Naive thymus-derived CD4-positive, alpha-beta T cell (primary cell): ENCODE measurements at regions of chr12 and their contacts with region 1.

Region 1: DNA sequence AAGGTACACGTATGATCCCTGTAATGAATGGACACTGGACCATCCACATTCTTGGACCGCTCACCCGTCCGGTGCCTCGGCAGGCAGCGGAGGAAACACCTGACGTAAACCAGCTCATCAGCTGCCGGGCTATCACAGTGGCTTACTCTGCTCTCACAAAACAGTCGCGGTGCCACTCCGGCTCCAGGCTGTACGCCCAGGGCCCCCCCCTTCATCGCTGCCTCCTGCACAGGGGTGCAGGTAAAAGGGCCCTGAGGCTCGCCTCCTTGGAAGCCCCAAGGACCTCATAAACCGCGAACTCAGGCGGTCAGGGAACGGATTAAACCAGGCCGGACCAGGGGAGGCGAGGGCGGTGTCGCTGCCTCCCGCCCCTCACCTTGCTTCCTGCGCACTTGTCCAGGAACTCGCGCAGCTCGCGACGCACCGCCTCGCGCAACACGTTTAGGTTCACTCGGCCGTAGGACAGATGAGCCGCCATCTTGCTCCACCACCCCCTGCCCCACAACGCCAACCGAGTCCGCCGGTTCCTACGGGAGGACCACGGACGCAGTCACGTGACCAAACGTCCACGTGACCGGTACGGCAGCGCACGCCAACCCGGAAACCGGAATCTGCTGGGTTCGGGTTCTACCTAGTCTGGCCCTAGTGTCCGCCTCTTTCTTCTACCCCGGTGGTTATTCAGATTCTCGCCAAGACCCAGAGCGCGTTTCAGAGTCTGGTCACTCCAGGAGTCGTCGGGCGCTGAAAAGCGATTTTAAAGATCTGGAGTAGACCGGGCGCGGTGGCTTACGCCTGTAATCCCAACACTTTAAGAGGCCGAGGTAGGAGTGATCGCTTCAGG is at the start of gene VPS33A:
- DNase-seq: peak; percentile 82 to 96 (median 90)
- ATAC-seq: peak; percentile 89
- H3K4me3 ChIP-seq: peak within 1 kb of the TSS; percentile 74
- H3K4me3 Mint-ChIP-seq: peak within 1 kb of the TSS; percentile 93 to 99 (median 96)
- H3K27ac ChIP-seq: peak within 1 kb of the TSS; percentile 95
- H3K27ac Mint-ChIP-seq: peak within 1 kb of the TSS; percentile 98 to 100 (median 99)
- H3K4me1 ChIP-seq: peaks cover 12 to 17% of the 10 kb centered on the region in 2 donors
- H3K4me1 Mint-ChIP-seq: peaks cover 0 to 37% (median 32%) of the 10 kb centered on the region in 7 donors
- H3K27me3 ChIP-seq: no peaks in the 10 kb centered on the region
- H3K27me3 Mint-ChIP-seq: peaks cover 0 to 6% (median 0%) of the 10 kb centered on the region in 5 donors
- total RNA-seq, gene VPS33A: 19.9 to 34.5 (median 31.4) TPM

Region 2: DNA sequence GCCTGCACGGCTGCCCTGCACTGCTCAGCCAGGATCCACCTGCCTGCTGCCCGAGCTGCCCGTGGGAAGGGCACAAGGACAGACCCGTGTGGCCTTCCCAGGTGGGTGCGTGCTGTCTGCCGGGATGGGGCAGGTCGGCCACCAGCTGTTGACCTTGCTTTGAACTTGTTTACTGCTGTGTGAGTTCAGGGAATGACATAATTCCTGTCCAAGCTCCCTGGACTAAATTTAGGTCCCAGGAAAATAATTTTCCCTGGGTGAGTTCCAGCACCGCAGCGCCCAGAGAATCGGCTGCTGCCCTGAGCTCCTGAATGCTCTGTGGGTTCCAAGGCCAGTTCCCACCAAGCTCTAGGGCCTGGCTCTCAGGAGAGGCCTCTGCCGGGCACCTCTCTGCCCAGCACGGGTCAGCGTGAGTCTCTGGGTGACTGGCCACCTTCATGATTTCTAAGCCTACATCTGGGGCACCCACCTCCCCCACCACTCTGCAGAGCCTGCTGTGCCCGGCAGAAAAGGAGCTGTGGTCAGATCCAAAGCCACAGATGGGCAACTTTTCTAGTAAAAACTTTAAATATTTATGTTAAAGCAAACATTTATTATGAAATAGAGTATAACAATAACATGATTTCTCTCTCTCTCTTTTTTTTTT is 214.8 kb before region 1 on chr12:
- CTCF ChIA-PET with region 1: interaction called, 10 read pairs
- POLR2A ChIA-PET with region 1: no interaction called
- intact Hi-C with region 1: loop called in 1 of 2 experiments (anchors 2 kb)
- DNase-seq: no peak
- ATAC-seq: no peak
- H3K4me3 ChIP-seq: no peak overlapping the region
- H3K4me3 Mint-ChIP-seq: no peak overlapping the region
- H3K27ac ChIP-seq: no peak overlapping the region
- H3K27ac Mint-ChIP-seq: no peak overlapping the region
- H3K4me1 ChIP-seq: no peaks in the 10 kb centered on the region
- H3K4me1 Mint-ChIP-seq: peaks cover 0 to 7% (median 5%) of the 10 kb centered on the region in 7 donors
- H3K27me3 ChIP-seq: no peaks in the 10 kb centered on the region
- H3K27me3 Mint-ChIP-seq: no peaks in the 10 kb centered on the region

Region 3: DNA sequence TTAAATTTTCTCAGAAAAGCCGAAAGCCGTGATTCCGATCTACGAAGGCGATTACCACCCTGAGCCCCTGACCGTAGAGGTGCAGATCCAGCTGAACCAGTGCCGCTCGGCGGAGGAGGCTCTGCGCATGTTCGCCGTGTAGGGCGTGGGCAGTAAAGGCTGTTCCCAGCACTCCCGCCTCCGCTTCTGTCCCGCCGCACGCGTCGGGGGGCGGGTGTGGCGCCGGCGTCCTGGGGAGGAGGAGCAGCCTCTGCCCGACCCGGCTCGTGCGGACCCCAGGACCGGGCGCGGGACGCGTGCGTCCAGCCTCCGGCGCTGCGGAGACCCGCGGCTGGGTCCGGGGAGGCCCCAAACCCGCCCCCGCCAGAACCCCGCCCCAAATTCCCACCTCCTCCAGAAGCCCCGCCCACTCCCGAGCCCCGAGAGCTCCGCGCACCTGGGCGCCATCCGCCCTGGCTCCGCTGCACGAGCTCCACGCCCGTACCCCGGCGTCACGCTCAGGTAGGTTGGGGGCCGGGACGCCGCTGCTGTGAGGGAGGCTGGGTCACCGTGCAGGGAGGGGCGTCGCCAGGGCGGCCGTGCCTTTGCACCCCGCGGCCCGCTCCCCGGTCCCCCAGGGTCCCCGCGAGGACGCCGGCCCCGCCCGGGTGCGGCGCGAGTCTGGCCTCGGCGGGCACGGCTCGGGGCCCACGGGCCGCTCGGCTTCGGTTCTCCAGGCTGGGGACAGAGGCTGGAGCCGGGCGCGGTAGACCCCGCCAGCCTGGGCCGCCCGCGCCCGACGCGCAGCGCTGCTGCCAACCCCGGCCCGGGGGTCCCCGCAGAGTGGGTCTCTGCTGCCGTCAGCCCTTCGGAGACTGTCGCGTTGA is 62.6 kb before region 1 on chr12 and contains the start of gene B3GNT4:
- CTCF ChIA-PET with region 1: no interaction called
- POLR2A ChIA-PET with region 1: interaction called, 5 read pairs
- intact Hi-C with region 1: loop called (anchors 2 kb)
- DNase-seq: peak; percentile 50 to 75 (median 67)
- ATAC-seq: peak; percentile 79
- H3K4me3 ChIP-seq: peak within 1 kb of the TSS; percentile 68
- H3K4me3 Mint-ChIP-seq: peak within 1 kb of the TSS; percentile 79 to 87 (median 82)
- H3K27ac ChIP-seq: no peak within 1 kb of the TSS
- H3K27ac Mint-ChIP-seq: peak within 1 kb of the TSS in 5 of 9 donors; percentile 44 to 77 (median 46)
- H3K4me1 ChIP-seq: peaks cover 6 to 10% of the 10 kb centered on the region in 2 donors
- H3K4me1 Mint-ChIP-seq: peaks cover 5 to 17% (median 14%) of the 10 kb centered on the region in 7 donors
- H3K27me3 ChIP-seq: peaks cover 0 to 3% of the 10 kb centered on the region in 2 donors
- H3K27me3 Mint-ChIP-seq: peaks cover 0 to 35% (median 0%) of the 10 kb centered on the region in 5 donors
- total RNA-seq, gene B3GNT4: 0.54 to 1.1 (median 0.70) TPM in 3 of 5 experiments, not detected in the others

Region 4: DNA sequence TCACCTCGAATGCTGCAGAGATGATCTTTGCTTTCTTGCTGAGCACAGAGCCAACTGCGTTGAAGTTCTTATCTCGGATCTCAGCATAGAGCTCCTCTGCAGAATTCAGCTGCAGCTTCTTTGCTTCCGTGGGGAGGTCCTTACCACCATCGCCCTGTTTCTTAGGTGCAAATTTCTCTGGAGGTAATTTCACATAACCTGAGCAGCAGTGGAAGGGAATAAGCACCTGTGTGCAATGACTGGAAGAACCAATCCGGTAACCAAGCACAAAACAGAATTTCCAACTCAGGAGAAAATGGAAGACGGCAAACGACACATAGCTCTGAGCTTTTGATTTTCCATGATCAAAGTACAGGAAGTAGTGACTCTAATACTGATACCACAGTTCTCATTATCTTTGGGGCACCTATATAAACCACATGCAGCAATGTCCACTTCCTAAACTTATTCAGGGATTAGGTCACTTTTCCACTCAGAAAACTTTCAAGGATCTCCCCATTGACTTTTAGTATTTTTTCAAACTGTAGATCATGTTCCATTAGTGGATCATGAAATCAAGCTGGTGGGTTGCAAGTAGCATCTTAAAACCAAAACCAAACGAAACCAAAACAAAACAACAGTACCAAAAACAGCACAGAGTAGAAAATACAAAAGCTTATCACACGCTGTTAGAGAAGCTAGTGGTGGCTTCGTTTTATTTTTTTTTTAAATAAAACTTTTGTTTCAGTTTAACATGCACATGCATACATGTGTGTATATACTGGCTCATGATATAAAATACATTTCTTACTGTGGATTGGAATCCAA is 21.4 kb before region 1 on chr12:
- CTCF ChIA-PET with region 1: interaction called, 4 read pairs
- POLR2A ChIA-PET with region 1: interaction called, 20 read pairs
- intact Hi-C with region 1: loop called (anchors 1 to 2 kb)
- DNase-seq: peak in 7 of 9 donors; percentile 18 to 59 (median 43)
- ATAC-seq: peak; percentile 80
- H3K4me3 ChIP-seq: peak overlapping the region; percentile 50
- H3K4me3 Mint-ChIP-seq: peak overlapping the region; percentile 76 to 87 (median 82)
- H3K27ac ChIP-seq: peak overlapping the region; percentile 58
- H3K27ac Mint-ChIP-seq: peak overlapping the region; percentile 71 to 94 (median 90)
- H3K4me1 ChIP-seq: peaks cover 19 to 26% of the 10 kb centered on the region in 2 donors
- H3K4me1 Mint-ChIP-seq: peaks cover 8 to 31% (median 27%) of the 10 kb centered on the region in 7 donors
- H3K27me3 ChIP-seq: no peaks in the 10 kb centered on the region
- H3K27me3 Mint-ChIP-seq: no peaks in the 10 kb centered on the region

Region 5: GRCh38 chr12:122336015-122336946 is 70.1 kb after region 1 on chr12:
- CTCF ChIA-PET with region 1: interaction called, 3 read pairs
- POLR2A ChIA-PET with region 1: no interaction called
- intact Hi-C with region 1: loop called in 1 of 2 experiments (anchors 1 kb)
- DNase-seq: peak in 8 of 9 donors; percentile 16 to 43 (median 33)
- ATAC-seq: peak; percentile 57
- H3K4me3 ChIP-seq: no peak overlapping the region
- H3K4me3 Mint-ChIP-seq: peak overlapping the region in 2 of 10 donors; percentile 21 to 32
- H3K27ac ChIP-seq: no peak overlapping the region
- H3K27ac Mint-ChIP-seq: peak overlapping the region in 7 of 9 donors; percentile 38 to 82 (median 71)
- H3K4me1 ChIP-seq: no peaks in the 10 kb centered on the region
- H3K4me1 Mint-ChIP-seq: peaks cover 5 to 18% (median 12%) of the 10 kb centered on the region in 7 donors
- H3K27me3 ChIP-seq: no peaks in the 10 kb centered on the region
- H3K27me3 Mint-ChIP-seq: no peaks in the 10 kb centered on the region

Region 6: DNA sequence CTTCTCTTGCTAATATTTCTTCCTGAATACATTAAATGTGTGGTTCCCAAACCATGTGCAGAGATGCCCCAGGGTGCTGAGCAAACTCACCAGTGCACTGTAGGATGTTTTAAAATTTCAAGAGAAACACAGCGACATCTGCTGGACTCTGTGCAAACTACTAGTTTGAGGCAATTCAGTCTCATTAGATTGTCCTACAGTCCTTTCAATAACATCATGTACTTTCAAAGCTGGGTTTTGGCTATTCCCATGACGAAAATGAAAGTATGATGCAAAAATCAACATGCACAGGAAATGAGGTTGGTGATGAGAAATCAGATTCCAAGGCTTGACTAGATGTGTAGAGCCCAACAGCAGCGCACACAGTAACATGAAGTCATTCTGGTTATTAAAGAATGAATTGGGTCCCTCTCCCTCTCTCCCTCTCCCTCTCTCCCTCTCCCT is 90.1 kb after region 1 on chr12:
- CTCF ChIA-PET with region 1: no interaction called
- POLR2A ChIA-PET with region 1: no interaction called
- intact Hi-C with region 1: loop called in 1 of 2 experiments (anchors 2 kb)
- DNase-seq: peak in 8 of 9 donors; percentile 31 to 58 (median 41)
- ATAC-seq: peak; percentile 86
- H3K4me3 ChIP-seq: no peak overlapping the region
- H3K4me3 Mint-ChIP-seq: no peak overlapping the region
- H3K27ac ChIP-seq: no peak overlapping the region
- H3K27ac Mint-ChIP-seq: peak overlapping the region in 5 of 9 donors; percentile 13 to 59 (median 35)
- H3K4me1 ChIP-seq: no peaks in the 10 kb centered on the region
- H3K4me1 Mint-ChIP-seq: peaks cover 0 to 7% (median 4%) of the 10 kb centered on the region in 7 donors
- H3K27me3 ChIP-seq: no peaks in the 10 kb centered on the region
- H3K27me3 Mint-ChIP-seq: no peaks in the 10 kb centered on the region

Region 7: GRCh38 chr12:122452701-122453285 is 186.6 kb after region 1 on chr12:
- CTCF ChIA-PET with region 1: no interaction called
- POLR2A ChIA-PET with region 1: no interaction called
- intact Hi-C with region 1: loop called in 1 of 2 experiments (anchors 1 kb)
- DNase-seq: no peak
- ATAC-seq: no peak
- H3K4me3 ChIP-seq: peak overlapping the region; percentile 36
- H3K4me3 Mint-ChIP-seq: peak overlapping the region; percentile 64 to 87 (median 81)
- H3K27ac ChIP-seq: peak overlapping the region; percentile 63
- H3K27ac Mint-ChIP-seq: peak overlapping the region; percentile 91 to 99 (median 98)
- H3K4me1 ChIP-seq: peaks cover 22 to 24% of the 10 kb centered on the region in 2 donors
- H3K4me1 Mint-ChIP-seq: peaks cover 22 to 41% (median 33%) of the 10 kb centered on the region in 7 donors
- H3K27me3 ChIP-seq: no peaks in the 10 kb centered on the region
- H3K27me3 Mint-ChIP-seq: no peaks in the 10 kb centered on the region